ENCODE measurements at regions of chr22 and their contacts with region 1.

Region 1: DNA sequence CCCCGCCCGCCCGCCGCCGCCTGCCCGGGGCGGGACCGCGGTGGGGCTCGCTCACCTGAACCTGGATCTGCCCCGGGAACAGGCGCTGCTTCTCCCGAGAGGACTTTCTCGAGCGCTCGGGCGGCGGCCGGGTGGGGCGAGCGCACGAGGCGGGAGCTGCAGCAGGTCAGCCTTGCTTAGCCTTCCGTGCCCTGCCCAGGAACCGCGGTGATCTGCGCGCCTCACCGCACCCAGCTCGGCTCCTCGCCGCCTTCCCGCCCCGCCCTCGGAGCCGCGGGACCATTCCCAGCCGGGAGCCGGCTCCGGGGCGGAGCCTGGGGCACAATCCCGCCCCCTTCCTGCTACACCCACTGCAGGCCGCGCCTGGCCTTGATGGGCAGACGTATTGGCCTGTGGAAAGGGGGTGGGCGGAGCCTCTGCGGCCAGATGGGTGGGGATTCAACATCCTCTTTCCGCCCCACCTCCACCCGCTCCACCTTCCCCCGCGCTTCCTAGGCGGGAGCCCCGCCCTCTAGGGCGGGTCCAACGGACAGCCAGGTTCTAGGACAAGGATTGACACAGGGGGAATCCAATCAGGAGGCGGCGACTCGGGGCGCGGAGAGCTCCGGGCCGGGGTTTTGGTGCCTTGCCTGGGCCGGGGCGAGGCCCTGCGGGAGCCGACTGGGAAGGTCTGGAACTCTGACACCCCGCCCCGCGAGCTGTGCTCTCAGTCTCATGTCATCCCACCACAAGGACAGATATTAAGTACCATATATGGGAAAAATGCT is at the start of gene MYH9:
- DNase-seq: peak; percentile 98
- H3K4me3 ChIP-seq: peak within 1 kb of the TSS; percentile 93
- CTCF ChIP-seq: no peak

Region 2: GRCh38 chr22:36331306-36331911 is 56.5 kb before region 1 on chr22:
- CTCF ChIA-PET with region 1: no interaction called
- POLR2A ChIA-PET with region 1: interaction called, 11 read pairs
- DNase-seq: peak; percentile 86
- H3K4me3 ChIP-seq: no peak overlapping the region
- CTCF ChIP-seq: no peak

Region 3: GRCh38 chr22:36339171-36340065 is 48.5 kb before region 1 on chr22:
- CTCF ChIA-PET with region 1: no interaction called
- POLR2A ChIA-PET with region 1: interaction called, 12 read pairs
- DNase-seq: peak; percentile 62
- H3K4me3 ChIP-seq: no peak overlapping the region
- CTCF ChIP-seq: no peak

Region 4: DNA sequence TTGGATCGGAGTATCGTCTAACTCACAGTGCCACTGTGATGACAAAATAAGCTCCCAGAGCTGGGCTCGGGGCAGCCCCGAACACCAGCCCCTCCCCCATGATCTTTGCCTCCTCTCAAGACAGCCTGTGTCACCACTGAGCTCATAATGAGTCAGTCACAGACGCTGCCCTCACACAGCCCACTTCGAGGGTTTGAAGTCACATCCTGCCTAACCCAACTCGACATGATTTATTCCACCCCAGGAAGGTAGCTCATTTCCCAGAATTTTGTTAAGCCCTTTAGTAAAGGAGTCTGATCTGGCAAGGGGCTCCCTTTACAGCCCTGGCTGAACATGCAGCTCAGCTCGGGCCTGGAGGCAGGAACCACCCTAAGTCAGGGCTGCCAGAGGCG is 22.9 kb before region 1 on chr22:
- CTCF ChIA-PET with region 1: interaction called, 3 read pairs
- POLR2A ChIA-PET with region 1: interaction called, 15 read pairs
- DNase-seq: peak; percentile 52
- H3K4me3 ChIP-seq: no peak overlapping the region; the same call in 1 of the 2 replicates
- CTCF ChIP-seq: no peak

Region 5: GRCh38 chr22:36374603-36375024 is 13.3 kb before region 1 on chr22:
- CTCF ChIA-PET with region 1: interaction called, 3 read pairs
- POLR2A ChIA-PET with region 1: interaction called, 12 read pairs
- DNase-seq: no peak
- H3K4me3 ChIP-seq: 0 out of 2 replicates have a peak overlapping the region, but pooled peaks have one; percentile 12
- CTCF ChIP-seq: no peak

Region 6: GRCh38 chr22:36398621-36399469 is 10.9 kb after region 1 on chr22:
- CTCF ChIA-PET with region 1: no interaction called
- POLR2A ChIA-PET with region 1: interaction called, 12 read pairs
- DNase-seq: no peak
- H3K4me3 ChIP-seq: no peak overlapping the region
- CTCF ChIP-seq: no peak

Region 7: DNA sequence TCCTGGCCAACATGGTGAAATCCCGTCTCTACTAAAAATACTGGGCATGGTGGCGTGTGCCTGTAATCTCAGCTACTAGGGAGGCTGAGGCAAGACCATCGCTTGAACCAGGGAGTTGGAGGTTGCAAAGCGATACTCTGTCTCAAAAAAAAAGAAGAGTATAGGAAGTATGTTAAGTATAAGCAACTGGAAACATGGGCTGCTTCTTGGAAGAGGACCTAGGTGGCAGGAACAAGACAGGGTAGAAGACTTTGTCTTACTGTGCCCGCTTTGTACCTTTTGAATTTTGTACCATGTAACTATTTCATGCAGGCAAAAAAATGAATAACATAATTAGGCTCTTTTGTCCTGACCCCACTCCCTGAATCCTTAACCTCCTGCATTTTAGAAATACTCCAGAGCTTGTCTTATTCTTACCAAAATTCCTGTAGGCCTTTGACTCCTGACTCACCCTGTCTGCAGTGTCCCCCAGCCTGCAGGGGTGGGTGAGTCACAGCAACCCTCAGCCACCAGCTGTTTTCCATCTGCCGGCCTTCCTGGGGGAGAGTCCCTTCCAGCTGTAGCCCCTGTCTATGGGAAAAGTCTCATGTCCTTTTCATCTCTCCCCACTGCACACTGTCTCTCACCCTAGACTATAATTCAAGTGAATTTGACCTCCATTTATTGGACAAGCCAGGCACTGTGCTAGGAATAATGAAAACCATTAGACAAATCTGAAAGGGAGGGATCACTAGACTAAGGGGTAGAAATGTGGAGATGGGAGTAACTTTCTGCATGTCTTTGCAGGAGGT is 51.7 kb after region 1 on chr22:
- CTCF ChIA-PET with region 1: no interaction called
- POLR2A ChIA-PET with region 1: interaction called, 11 read pairs
- DNase-seq: peak; percentile 70
- H3K4me3 ChIP-seq: no peak overlapping the region
- CTCF ChIP-seq: no peak

Region 8: DNA sequence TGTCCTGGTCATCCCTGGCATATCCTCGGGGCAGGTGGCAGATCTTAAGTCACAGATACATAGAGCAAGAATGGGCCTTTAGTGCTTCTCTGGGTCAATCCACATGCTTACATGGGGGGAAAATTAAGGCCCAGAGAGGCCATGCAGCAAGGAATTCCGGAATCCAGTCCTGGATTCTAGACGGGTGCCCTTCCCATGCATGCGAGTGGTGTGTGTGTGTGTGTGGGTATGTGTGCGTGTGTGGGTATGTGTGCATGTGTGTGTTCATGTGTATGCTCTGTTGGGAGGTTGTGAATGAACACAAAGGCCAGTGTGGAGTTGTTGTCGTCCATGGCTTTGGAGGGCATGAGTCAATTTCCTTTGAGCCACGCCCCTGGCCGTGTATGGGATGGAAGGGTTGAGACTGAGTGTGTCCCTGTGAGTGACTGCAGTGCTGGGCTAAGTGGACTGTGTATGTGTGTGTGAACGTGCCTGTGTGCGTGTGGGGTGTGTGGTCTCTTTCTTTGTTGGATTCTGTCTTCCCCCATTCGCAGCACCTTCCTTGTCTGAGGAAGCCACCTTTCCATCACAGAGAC is 174.4 kb after region 1 on chr22:
- CTCF ChIA-PET with region 1: no interaction called
- POLR2A ChIA-PET with region 1: no interaction called
- DNase-seq: no peak
- H3K4me3 ChIP-seq: no peak overlapping the region
- CTCF ChIP-seq: no peak

Region 9: GRCh38 chr22:36773935-36774334 is 386.0 kb after region 1 on chr22:
- CTCF ChIA-PET with region 1: no interaction called
- POLR2A ChIA-PET with region 1: no interaction called
- DNase-seq: no peak
- H3K4me3 ChIP-seq: no peak overlapping the region
- CTCF ChIP-seq: peak; percentile 43